ENCODE measurements at regions of chr4 and their contacts with region 1.

Region 1: GRCh38 chr4:123767806-123768205 is 371.2 kb downstream of the SPRY1 start:
- DNase-seq: no peak
- ATAC-seq: no peak

Region 2: DNA sequence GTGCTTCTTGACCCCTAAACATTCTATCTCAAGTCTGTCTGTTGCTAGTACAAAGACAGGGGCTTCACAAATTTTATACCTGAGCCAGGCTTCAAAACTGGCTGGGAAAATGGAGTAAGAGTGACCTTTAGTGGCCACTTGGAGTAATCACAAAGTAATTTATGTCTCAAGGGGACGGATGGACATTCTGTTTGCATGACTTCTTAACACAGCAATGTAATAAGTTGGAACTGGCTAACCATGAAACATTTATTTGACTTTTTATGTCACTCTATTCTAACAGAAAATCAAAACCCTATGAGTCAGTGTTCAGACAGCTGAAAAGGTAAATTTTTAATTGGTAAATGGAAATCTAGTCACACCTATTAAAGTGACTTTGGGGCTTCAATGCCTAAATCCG is 344.1 kb after region 1 on chr4:
- intact Hi-C with region 1: loop called (anchors 5 kb)
- DNase-seq: no peak
- ATAC-seq: peak; percentile 96

Measured in Right ventricle myocardium superior (tissue), 1 donor.